Activated naive CD4-positive, alpha-beta T cell treated with anti-CD3 and anti-CD28 coated beads for 36 hours (primary cell): ENCODE measurements at regions of chr2 and their contacts with region 1.

Region 1: DNA sequence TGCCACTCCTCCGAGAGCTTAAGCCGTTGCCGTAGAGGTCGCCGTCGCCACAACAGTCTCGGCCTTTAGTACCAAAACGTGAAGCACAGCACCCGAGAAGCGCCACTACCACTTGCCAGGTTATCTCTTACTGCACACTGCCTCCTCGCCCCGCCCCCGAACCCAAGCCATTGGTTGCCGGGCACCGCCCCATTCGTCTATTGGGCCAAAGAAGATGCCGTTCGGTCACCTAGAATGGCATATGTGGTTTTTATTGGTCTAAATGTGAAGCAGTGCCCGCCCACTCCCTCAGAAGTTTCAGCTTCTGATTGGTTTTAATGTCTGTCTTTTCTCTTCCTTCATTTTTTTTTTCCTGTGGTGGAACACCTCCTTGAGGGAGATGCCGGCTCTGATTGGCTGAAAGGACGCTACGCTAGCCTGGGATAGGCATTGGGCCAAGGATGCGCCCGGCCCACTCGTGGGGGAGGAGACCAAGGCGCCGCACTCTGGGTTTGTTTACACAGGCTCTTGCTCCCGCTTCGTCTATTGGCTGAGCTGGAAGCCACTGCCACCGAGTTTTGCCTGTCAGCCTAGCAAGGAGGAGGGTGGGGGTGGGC is at the start of gene PAIP2B:
- DNase-seq: peak; percentile 99
- H3K4me3 Mint-ChIP-seq: peak within 1 kb of the TSS; percentile 99
- H3K27ac Mint-ChIP-seq: peak within 1 kb of the TSS; percentile 85
- H3K4me1 Mint-ChIP-seq: peaks cover 19% of the 10 kb centered on the region
- H3K27me3 Mint-ChIP-seq: no peaks in the 10 kb centered on the region
- total RNA-seq, gene PAIP2B: 3.0 to 3.2 TPM

Region 2: DNA sequence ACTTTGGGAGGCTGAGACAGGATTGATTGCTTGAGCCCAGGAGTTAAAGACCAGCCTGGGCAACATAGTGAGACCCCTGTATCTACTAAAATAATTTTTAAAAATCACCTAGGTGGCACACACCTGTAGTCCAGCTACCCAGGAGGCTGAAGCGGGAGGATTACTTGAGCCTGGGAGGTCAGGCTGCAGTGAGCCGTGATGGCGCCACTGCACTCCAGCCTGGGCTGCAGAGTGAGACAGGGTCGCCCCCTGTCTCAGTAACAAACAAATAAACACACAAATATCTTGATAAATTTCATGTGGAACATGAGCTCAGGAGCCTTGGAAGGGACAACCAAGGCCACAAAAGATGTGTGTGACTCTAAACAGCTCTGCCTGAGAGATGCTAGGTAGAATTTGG is 260.4 kb before region 1 on chr2:
- CTCF ChIA-PET with region 1: no interaction called
- intact Hi-C with region 1: no loop called
- DNase-seq: no peak
- H3K4me3 Mint-ChIP-seq: no peak overlapping the region
- H3K27ac Mint-ChIP-seq: no peak overlapping the region
- H3K4me1 Mint-ChIP-seq: peaks cover 3% of the 10 kb centered on the region
- H3K27me3 Mint-ChIP-seq: peaks cover 14% of the 10 kb centered on the region

Region 3: DNA sequence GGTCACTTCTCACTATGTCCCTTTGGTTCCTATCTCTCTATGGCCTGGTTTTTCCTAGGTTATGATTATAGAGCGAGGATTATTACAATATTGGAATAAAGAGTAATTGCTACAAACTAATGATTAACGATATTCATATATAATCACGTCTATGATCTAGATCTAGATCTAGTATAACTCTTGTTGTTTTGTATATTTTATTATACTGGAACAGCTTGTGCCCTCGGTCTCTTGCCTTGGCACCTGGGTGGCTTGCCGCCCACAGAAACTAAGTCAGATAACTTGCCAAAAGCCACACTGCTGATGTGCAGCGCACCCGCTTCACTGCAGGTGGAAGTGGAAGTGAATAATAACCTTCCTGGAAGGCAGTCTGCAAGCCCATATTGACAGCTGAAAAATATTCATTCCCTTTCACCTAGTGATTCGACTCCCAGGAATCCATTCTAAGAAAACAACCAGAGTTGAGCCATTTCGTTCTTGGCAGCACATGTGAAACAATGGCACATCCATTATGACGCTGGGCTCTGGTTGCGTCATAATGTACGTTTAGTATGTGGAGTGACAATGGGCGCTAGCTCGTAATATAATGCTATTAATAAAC is 249.4 kb before region 1 on chr2:
- CTCF ChIA-PET with region 1: no interaction called
- intact Hi-C with region 1: loop called (anchors 1 kb)
- DNase-seq: peak; percentile 63
- H3K4me3 Mint-ChIP-seq: peak overlapping the region; percentile 72
- H3K27ac Mint-ChIP-seq: no peak overlapping the region
- H3K4me1 Mint-ChIP-seq: peaks cover 13% of the 10 kb centered on the region
- H3K27me3 Mint-ChIP-seq: no peaks in the 10 kb centered on the region

Region 4: DNA sequence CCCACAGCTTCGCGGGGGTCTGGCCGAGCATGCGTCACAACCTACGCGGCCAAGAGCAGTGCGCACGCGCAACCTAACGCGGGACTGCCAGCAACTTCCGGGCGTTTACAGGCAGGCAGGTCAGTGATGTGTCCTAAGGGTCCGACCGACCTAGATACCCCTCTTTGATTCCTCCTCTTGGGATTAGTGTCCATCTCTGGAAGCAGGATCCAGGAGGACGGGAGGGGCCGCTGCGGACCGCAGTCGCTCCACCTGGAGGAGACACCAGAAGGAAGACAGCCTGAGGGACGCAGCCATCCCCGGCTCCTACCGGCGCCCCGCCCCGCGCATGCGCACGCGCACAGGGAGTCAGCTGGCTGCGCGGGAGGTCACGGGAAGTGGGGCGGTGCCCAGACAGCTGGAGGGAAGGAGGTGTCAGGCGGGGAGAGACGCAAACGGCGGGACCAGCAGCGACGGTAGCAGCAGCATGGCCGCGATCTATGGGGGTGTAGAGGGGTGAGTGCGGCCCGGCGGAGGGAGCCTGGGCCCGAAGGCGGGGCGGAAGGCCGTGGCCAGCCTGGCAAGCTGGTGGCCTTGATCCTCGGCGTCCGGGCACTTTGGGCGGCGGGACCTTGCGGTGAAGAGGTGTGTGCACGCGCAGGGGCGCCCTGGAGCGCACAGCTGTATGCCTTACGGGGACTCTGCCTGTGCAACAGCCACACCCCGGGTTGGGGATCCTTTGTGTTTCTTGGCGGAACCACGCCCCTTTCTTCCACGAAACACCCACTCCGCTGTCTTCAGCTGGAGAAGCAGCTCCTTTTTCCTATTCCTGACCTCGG is 158.6 kb before region 1 on chr2 and contains the start of gene NAGK:
- CTCF ChIA-PET with region 1: interaction called, 3 read pairs
- intact Hi-C with region 1: loop called (anchors 1 kb)
- DNase-seq: peak; percentile 96
- H3K4me3 Mint-ChIP-seq: peak within 1 kb of the TSS; percentile 95
- H3K27ac Mint-ChIP-seq: peak within 1 kb of the TSS; percentile 98
- H3K4me1 Mint-ChIP-seq: peaks cover 49% of the 10 kb centered on the region
- H3K27me3 Mint-ChIP-seq: no peaks in the 10 kb centered on the region
- total RNA-seq, gene NAGK: 33.2 to 38.3 TPM

Region 5: DNA sequence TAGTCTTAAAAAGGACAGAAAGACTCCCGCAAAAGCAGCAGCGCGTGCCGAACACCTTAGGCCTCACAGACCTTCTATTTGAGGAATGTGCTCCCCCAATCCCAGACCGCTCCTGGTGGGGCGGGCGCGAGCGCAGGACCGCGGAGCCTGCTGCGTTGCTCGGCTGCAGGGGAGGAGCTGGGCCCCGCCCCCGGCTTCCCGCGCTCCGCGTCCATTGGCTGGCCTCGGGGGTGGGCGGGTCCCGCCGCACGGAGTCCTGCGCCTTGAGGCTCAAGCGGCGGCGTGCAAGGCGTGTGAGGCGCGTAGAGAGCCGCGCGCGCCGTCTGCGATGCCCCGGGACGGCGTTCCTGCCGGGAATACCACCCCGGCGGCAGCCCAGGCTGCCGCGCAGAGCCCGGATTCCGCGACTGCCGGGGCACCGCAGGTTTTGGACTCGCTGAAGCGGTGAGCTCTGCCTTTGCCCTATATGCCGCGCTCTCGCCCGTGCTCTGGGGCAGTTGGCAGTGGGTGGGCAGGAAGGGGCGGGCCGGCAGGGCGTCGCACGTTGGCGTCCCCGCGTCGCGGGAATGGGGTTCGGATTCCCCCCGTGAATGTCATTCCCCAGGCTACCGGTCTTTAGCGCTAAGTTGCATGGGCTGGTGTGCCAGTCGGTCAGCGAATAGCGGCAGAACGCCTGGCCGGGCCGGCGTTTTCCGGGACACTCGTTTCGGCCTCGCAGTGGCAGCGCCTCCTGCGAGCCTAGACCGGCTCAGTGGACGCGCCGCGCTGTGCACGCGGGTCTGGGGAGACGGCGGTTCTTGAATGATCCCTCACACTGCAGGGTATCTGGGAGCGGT is 49.5 kb after region 1 on chr2:
- CTCF ChIA-PET with region 1: no interaction called
- intact Hi-C with region 1: loop called (anchors 1 kb)
- DNase-seq: peak; percentile 87
- H3K4me3 Mint-ChIP-seq: peak overlapping the region; percentile 69
- H3K27ac Mint-ChIP-seq: no peak overlapping the region
- H3K4me1 Mint-ChIP-seq: peaks cover 8% of the 10 kb centered on the region
- H3K27me3 Mint-ChIP-seq: peaks cover 68% of the 10 kb centered on the region

Region 6: GRCh38 chr2:71331581-71332434 is 104.7 kb after region 1 on chr2 and contains the start of gene ZNF638:
- CTCF ChIA-PET with region 1: interaction called, 10 read pairs
- intact Hi-C with region 1: loop called (anchors 1 kb)
- DNase-seq: peak; percentile 93
- H3K4me3 Mint-ChIP-seq: peak within 1 kb of the TSS; percentile 99
- H3K27ac Mint-ChIP-seq: peak within 1 kb of the TSS; percentile 98
- H3K4me1 Mint-ChIP-seq: peaks cover 37% of the 10 kb centered on the region
- H3K27me3 Mint-ChIP-seq: no peaks in the 10 kb centered on the region
- total RNA-seq, gene ZNF638: 79.8 to 84.0 TPM

Region 7: DNA sequence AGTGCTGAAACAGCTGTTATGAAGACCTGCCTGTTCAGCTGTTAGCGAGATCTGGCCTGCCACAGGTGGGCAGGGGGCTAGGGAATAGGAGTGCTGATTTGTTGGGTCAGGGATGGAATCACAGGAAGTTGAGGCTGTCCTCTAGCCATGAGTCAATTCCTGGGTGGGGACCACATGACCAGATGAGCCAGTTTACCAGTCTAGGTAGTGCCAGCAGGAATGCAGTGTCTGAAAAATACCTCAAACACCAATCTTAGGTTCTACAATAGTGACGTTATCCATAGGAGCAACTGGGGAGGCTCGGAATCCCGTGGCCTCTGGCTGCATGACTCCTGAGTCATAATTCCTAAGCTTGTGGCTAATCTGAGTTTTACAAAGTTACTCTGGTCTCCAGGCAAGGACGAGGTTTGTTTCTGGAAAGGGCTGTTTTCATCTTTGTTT is 271.2 kb after region 1 on chr2:
- CTCF ChIA-PET with region 1: no interaction called
- intact Hi-C with region 1: no loop called
- DNase-seq: no peak
- H3K4me3 Mint-ChIP-seq: no peak overlapping the region
- H3K27ac Mint-ChIP-seq: no peak overlapping the region
- H3K4me1 Mint-ChIP-seq: no peaks in the 10 kb centered on the region
- H3K27me3 Mint-ChIP-seq: peaks cover 6% of the 10 kb centered on the region

Region 8: DNA sequence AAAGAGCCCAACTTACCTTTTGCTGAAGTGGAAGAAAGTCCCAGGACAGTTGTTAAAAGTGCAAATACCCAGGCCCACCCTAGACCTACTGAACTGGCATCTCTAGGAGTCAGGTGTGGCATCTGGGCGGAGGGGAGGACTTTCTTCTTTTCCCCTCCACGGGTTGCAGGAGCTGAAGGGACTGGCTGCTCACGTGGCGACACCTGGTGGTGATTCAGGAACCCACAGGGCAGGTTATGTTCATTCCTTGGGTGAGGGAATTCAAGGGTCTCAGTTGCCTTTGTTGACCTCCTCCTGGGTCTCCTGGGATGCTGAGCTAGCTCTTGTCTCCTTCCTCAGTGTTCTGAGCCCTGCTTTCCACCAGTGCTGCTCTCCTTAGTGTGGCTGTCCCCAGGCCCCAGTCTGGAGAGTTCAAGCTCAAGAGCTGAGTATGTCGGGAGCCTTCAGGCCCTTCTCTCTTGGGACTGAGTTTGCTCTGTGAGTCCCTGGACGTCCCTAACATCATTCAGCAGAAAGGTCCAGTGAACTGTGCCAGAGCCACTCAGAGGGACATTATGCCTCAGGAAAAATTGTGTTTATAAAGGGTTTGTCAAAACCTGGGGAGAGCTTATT is 283.2 kb after region 1 on chr2:
- CTCF ChIA-PET with region 1: interaction called, 8 read pairs
- intact Hi-C with region 1: loop called (anchors 2 kb)
- DNase-seq: peak; percentile 80
- H3K4me3 Mint-ChIP-seq: no peak overlapping the region
- H3K27ac Mint-ChIP-seq: no peak overlapping the region
- H3K4me1 Mint-ChIP-seq: no peaks in the 10 kb centered on the region
- H3K27me3 Mint-ChIP-seq: peaks cover 3% of the 10 kb centered on the region